ENCODE measurements at regions of chr3 and their contacts with region 1.

Region 1: GRCh38 chr3:134473868-134474546 is 11.8 kb downstream of the ANAPC13 start:
- DNase-seq: peak; percentile 79 to 90
- H3K4me3 ChIP-seq: no peak overlapping the region
- H3K4me1 ChIP-seq: peaks cover 27% of the 10 kb centered on the region
- H3K27me3 ChIP-seq: no peaks in the 10 kb centered on the region

Region 2: DNA sequence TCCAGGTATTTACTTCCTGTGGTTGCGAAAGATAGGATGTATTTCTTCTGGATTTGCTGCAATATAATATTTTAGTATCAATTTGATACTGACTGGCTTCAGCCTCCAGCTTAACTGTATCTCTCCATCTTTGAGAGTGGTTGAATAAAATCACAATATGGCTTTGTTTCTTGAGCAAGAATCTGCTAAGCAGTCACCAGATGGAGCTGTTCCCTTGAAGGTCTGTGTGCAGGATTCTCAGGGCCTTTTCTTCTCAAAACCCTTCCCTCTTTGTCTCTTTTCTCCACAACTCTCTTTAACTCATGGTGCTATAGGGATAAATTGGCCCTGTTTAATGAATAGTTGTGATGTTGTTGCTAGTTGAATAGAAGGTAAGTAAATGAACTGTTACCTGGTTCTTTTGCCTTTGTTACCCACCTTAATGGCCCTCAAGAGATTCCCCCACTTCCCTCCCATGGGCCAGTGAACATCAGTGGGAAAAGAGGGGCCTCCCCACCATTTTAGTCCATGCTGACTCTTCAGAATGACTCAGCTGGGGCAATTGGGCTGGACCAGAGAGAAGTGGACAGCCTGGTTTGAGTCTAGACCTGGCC is 543.6 kb before region 1 on chr3:
- in situ Hi-C with region 1: loop called (anchors 10 kb)
- DNase-seq: peak; percentile 42 to 64
- H3K4me3 ChIP-seq: no peak overlapping the region
- H3K4me1 ChIP-seq: no peaks in the 10 kb centered on the region; the same call in 1 of the 2 replicates
- H3K27me3 ChIP-seq: no peaks in the 10 kb centered on the region

Region 3: GRCh38 chr3:134212906-134213665 is 260.9 kb before region 1 on chr3:
- in situ Hi-C with region 1: loop called (anchors 5 kb)
- DNase-seq: peak; percentile 67 to 92
- H3K4me3 ChIP-seq: no peak overlapping the region
- H3K4me1 ChIP-seq: no peaks in the 10 kb centered on the region
- H3K27me3 ChIP-seq: no peaks in the 10 kb centered on the region

Region 4: DNA sequence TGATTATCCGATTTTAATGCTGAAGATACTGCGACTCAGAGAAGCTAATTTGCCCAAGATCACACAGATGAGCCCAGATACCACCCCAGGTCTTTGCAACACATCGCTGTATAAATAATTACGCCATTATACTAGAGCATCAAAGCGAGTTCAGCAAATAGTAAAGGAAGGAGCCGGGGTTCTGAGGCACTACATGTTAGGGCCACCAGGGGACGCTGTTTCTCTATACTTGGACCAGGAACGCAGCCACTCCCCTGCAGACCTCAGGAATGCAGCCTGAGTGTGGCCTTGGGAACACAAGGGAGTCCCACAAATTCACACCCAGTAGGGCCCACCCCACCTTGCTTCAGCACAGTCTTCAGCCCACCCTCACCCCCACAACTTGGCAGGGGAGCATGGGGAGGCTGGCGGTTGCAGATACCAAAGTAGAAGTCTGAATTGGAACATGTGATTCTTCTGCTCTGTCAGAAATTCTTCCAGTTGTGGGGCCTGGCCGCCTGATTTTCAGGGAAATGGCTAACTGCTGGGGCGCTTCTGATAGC is 165.6 kb before region 1 on chr3:
- in situ Hi-C with region 1: loop called (anchors 5 kb)
- DNase-seq: peak; percentile 73 to 90
- H3K4me3 ChIP-seq: 0 out of 2 replicates have a peak overlapping the region, but pooled peaks have one; percentile 3
- H3K4me1 ChIP-seq: peaks cover 6% of the 10 kb centered on the region
- H3K27me3 ChIP-seq: no peaks in the 10 kb centered on the region